ENCODE measurements at regions of chr15 and their contacts with region 1.

Region 1: DNA sequence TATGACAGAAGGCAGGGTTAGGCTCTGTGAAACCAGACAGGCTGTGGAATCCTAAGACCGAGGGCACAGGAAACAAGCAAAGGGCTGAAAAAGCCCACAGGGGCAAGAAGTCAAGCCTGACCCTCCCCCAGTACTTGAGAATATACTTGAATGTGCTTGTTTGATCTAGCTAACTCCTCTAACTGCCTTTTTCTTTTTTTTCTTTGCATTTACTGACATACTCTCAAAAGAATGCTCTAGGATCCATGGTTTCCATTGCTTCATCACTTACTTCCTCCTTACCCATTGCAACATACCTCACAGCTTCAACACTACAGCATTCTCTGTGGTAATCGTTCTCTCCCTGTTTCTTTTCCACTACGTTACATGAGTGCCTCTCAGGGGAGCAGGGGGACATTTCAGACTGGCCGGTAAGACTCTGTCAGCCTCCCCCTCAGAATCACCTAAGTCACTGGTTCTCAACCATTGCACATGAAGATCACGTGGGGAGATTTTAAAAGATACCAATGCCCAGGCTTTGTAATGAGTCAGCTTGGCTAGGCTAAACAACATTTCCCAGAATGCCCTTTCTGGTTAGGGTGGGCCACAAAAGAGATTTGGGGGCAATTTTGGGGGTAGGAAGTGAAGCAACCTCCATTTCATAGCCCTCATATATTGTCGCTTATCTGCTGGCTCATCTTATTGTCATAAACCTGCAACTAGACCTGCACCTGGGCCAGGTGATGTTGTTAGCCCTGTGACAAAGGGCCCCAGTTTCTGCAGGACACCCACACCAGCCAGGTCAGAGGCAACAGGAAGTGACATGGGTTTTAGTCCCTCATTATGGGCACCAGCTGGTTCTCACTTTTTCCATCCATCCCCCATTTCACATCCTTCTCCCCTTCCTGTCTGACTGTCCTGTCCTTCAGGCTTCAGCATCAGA is 24.6 kb upstream of the RSL24D1 start:
- DNase-seq: peak; percentile 89
- H3K4me3 ChIP-seq: peak overlapping the region; percentile 17; the same call in 1 of the 2 replicates
- H3K27ac ChIP-seq: peak overlapping the region; percentile 87
- H3K27me3 ChIP-seq: no peaks in the 10 kb centered on the region
- CTCF ChIP-seq: no peak

Region 2: GRCh38 chr15:55202206-55202605 is 19.1 kb before region 1 on chr15:
- CTCF ChIA-PET with region 1: interaction called, 15 read pairs
- POLR2A ChIA-PET with region 1: no interaction called
- DNase-seq: no peak
- H3K4me3 ChIP-seq: no peak overlapping the region
- H3K27ac ChIP-seq: no peak overlapping the region
- H3K27me3 ChIP-seq: no peaks in the 10 kb centered on the region
- CTCF ChIP-seq: no peak

Region 3: GRCh38 chr15:55282284-55282833 is 61.0 kb after region 1 on chr15:
- CTCF ChIA-PET with region 1: interaction called, 12 read pairs
- POLR2A ChIA-PET with region 1: interaction called, 7 read pairs
- DNase-seq: no peak
- H3K4me3 ChIP-seq: no peak overlapping the region
- H3K27ac ChIP-seq: peak overlapping the region; percentile 58
- H3K27me3 ChIP-seq: no peaks in the 10 kb centered on the region
- CTCF ChIP-seq: no peak

Region 4: GRCh38 chr15:55318588-55319494 is 97.5 kb after region 1 on chr15 and contains the starts of genes PIGB and PIGBOS1:
- CTCF ChIA-PET with region 1: interaction called, 13 read pairs
- POLR2A ChIA-PET with region 1: interaction called, 5 read pairs
- DNase-seq: peak; percentile 70
- H3K4me3 ChIP-seq: peak within 1 kb of the TSS; percentile 92
- H3K27ac ChIP-seq: peak within 1 kb of the TSS; percentile 91
- H3K27me3 ChIP-seq: no peaks in the 10 kb centered on the region
- CTCF ChIP-seq: peak; percentile 23; the same call in 1 of the 2 replicates
- polyA plus RNA-seq, gene PIGB: 17.5 and 19.6 TPM in 2 replicates
- polyA plus RNA-seq, gene PIGBOS1: 15.0 and 19.7 TPM in 2 replicates

Region 5: DNA sequence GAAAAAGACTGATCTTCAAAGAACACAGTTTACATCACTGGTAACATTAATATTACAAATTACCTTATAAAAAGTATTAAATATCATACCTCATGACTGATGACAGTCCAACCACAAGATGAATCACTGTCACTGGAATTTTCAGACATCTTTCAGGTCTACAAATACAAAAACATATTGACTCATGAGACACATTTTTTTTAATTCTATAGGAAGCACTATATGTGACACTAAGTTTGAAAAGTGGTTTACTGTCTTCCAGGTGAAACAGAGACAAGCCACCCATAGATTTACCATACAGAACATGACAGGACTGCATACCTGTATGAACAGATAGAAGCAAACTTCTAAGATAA is 167.9 kb after region 1 on chr15:
- CTCF ChIA-PET with region 1: no interaction called
- POLR2A ChIA-PET with region 1: no interaction called
- DNase-seq: no peak
- H3K4me3 ChIP-seq: no peak overlapping the region
- H3K27ac ChIP-seq: no peak overlapping the region
- H3K27me3 ChIP-seq: no peaks in the 10 kb centered on the region
- CTCF ChIP-seq: no peak